ENCODE measurements at regions of chr15 and their contacts with region 1.

Region 1: DNA sequence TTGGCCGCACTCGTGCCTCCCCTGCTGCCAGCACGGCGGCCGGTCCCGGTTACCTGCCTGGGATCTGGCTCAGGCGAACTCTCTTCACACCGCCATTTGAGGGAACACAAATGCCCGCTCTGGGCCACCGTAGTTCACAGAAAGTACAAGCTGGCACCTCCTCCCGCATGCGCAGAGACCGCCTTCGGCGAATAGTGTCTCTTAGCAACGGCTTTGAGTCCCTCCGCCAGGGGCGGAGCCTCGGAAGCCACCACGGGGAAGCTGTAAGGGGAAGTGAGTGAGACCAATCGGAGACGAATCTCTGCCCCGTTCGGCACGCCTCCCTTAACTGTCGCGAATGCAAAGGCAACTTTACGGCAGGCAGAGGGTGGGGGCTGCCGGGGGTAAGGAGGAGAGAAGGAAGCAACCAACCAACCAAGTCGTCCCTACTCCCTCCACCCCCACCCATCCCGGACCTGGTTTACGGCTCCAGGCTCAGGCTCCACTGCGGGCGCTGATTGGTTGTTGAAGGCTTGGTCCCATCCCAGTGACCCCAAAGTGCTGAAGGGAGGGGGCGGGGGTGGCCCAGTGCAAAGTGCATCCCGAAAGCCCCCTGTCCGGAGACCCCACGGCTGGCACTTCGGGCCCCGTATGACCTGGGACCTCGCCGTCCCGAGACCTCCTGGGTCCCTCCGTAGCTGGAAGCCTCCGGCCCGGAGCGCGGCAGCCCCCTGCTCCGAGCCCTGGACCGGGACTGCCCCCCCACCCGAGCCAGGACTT is at the starts of genes ASB7 and LINS1:
- DNase-seq: peak; percentile 100
- ATAC-seq: peak; percentile 96
- H3K4me3 ChIP-seq: peak within 1 kb of the TSS; percentile 85 to 99 (median 99)
- H3K27ac ChIP-seq: peak within 1 kb of the TSS; percentile 71
- H3K4me1 ChIP-seq: peaks cover 54% of the 10 kb centered on the region
- H3K27me3 ChIP-seq: no peaks in the 10 kb centered on the region; a peak in 1 of 5 replicates
- CTCF ChIP-seq: no peak; the same call in 1 of the 2 replicates
- EP300 ChIP-seq: no peak
- POLR2A ChIP-seq: peak; percentile 39 to 84; a peak in 3 of 4 replicates
- RAD21 ChIP-seq: peak; percentile 51; the same call in 1 of the 2 replicates
- total RNA-seq, gene ASB7: 12.1 and 15.2 TPM in 2 replicates
- total RNA-seq, gene LINS1: 9.6 and 10.4 TPM in 2 replicates

Region 2: DNA sequence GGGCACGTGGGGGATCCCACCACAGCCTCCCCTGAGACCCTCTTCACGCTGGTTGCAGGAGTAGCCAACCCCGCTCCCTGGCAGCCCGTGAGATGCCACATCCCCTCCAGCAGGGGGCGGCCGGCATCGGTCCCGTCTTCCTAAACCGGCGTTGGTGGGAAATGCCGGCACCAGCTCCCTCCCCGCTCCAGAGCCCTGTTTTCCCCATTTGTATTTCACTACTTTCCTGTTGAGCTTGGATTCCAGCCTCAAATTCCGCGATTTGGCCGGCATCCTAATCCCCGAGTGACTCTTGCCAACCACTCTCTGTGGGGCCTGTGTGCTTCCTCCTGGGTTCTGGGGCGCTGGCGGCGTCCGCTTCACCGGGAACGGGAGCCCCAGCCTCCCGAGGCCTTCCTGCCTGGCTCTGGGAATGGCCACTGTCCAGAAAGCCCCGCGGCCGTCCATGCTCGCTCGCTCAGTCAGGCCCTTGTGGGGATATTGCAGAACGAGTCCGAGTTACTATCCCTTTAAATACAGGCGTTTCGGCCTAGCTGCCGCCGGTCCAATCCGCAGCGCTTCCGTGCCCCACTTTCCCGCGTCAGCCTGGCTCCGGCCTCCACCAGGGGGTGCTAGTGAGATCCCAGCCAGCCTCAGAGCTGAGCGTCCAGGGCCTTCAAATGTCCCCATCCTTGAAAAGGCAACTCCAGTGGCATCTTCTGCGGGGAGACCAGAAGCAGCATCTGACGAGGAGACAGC is 252.4 kb before region 1 on chr15:
- CTCF ChIA-PET with region 1: no interaction called
- POLR2A ChIA-PET with region 1: interaction called, 5 read pairs
- in situ Hi-C with region 1: loop called (anchors 10 kb)
- intact Hi-C with region 1: loop called (anchors 1 kb)
- DNase-seq: peak; percentile 76
- ATAC-seq: peak; percentile 96
- H3K4me3 ChIP-seq: peak overlapping the region; percentile 51 to 72 (median 53); a peak in 5 of 6 replicates
- H3K27ac ChIP-seq: peak overlapping the region; percentile 39
- H3K4me1 ChIP-seq: peaks cover 19% of the 10 kb centered on the region
- H3K27me3 ChIP-seq: no peaks in the 10 kb centered on the region; a peak in 2 of 5 replicates
- CTCF ChIP-seq: peak; percentile 90
- EP300 ChIP-seq: no peak
- POLR2A ChIP-seq: no peak
- RAD21 ChIP-seq: peak; percentile 62